Dendritic cell treated with granulocyte-macrophage colony-stimulating factor and Interleukin-4, amounts not matched to agents 40 ng/mL and 50 ng/mL, for 4 days (primary cell): ENCODE measurements at regions of chr20 and their contacts with region 1.

Region 1: GRCh38 chr20:21505161-21505809 is 8.6 kb downstream of the NKX2-2 start:
- H3K4me3 Mint-ChIP-seq: no peak overlapping the region
- H3K27ac Mint-ChIP-seq: no peak overlapping the region
- H3K4me1 Mint-ChIP-seq: peaks cover 38% of the 10 kb centered on the region
- H3K27me3 Mint-ChIP-seq: peaks cover 93% of the 10 kb centered on the region

Region 2: DNA sequence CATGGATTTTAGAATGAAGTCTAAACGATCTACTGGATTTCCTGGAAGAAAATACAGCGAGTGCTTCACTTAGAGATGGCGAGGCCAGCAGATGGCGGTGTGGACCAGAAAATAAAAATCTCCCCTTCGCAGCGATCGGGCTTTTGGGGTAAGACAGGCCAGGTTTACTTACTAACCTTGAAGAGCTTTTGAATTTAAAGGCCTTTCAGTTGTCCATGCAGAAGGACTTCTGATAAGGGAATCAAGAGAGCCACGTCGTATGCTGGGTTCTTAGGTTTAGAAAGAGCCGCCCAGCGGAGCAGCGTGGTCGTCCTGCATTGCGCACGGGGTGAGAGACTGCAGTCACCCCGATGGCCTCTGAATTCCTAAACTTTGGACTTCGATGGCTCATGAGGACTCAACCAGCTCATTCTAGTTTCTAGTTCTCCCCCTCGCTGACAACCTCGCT is 667.7 kb before region 1 on chr20:
- intact Hi-C with region 1: loop called (anchors 1 kb)
- H3K4me3 Mint-ChIP-seq: no peak overlapping the region
- H3K27ac Mint-ChIP-seq: no peak overlapping the region
- H3K4me1 Mint-ChIP-seq: no peaks in the 10 kb centered on the region
- H3K27me3 Mint-ChIP-seq: peaks cover 22% of the 10 kb centered on the region

Region 3: DNA sequence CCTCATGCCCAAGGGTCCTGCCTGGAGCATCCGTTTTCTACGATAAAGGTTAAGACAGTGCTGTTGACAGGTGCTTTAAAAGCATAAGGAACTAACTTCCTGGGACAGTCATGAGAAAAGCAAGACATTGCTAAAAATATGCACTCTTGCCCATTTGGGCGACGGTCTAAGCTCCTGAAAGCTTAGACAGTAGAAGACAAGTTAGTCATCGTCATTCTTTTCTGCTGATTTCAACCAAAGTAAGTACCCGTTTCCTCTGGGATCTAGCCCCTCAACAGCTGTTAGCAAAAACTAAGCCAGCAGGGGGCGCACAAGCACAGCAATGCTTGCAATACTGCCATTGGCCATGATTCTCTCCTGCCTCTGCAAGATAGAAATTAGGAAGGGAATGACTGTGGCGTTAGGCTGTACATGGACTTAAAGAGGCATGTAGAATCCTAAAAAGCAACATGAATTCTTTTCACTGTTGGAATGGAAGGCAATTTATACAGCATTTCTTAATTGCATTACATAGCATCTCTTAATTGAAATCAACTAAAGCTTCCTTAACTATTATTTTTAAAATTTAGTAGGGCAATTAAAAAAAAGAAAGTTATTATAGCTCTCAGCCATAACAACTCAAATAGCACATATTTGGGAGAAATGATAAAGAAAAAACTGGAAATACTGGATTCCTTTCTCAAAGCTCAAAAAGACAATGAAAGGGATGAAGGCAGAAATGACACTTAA is 645.0 kb before region 1 on chr20:
- intact Hi-C with region 1: loop called (anchors 1 kb)
- H3K4me3 Mint-ChIP-seq: no peak overlapping the region
- H3K27ac Mint-ChIP-seq: no peak overlapping the region
- H3K4me1 Mint-ChIP-seq: no peaks in the 10 kb centered on the region
- H3K27me3 Mint-ChIP-seq: peaks cover 20% of the 10 kb centered on the region

Region 4: GRCh38 chr20:21048841-21049273 is 456.4 kb before region 1 on chr20:
- intact Hi-C with region 1: loop called (anchors 2 kb)
- H3K4me3 Mint-ChIP-seq: no peak overlapping the region
- H3K27ac Mint-ChIP-seq: no peak overlapping the region
- H3K4me1 Mint-ChIP-seq: no peaks in the 10 kb centered on the region
- H3K27me3 Mint-ChIP-seq: peaks cover 29% of the 10 kb centered on the region

Region 5: GRCh38 chr20:21125849-21126580 is 379.3 kb before region 1 on chr20 and contains the start of gene KIZ:
- intact Hi-C with region 1: loop called (anchors 10 kb)
- H3K4me3 Mint-ChIP-seq: peak within 1 kb of the TSS; percentile 93
- H3K27ac Mint-ChIP-seq: peak within 1 kb of the TSS; percentile 90
- H3K4me1 Mint-ChIP-seq: peaks cover 20% of the 10 kb centered on the region
- H3K27me3 Mint-ChIP-seq: peaks cover 8% of the 10 kb centered on the region

Region 6: DNA sequence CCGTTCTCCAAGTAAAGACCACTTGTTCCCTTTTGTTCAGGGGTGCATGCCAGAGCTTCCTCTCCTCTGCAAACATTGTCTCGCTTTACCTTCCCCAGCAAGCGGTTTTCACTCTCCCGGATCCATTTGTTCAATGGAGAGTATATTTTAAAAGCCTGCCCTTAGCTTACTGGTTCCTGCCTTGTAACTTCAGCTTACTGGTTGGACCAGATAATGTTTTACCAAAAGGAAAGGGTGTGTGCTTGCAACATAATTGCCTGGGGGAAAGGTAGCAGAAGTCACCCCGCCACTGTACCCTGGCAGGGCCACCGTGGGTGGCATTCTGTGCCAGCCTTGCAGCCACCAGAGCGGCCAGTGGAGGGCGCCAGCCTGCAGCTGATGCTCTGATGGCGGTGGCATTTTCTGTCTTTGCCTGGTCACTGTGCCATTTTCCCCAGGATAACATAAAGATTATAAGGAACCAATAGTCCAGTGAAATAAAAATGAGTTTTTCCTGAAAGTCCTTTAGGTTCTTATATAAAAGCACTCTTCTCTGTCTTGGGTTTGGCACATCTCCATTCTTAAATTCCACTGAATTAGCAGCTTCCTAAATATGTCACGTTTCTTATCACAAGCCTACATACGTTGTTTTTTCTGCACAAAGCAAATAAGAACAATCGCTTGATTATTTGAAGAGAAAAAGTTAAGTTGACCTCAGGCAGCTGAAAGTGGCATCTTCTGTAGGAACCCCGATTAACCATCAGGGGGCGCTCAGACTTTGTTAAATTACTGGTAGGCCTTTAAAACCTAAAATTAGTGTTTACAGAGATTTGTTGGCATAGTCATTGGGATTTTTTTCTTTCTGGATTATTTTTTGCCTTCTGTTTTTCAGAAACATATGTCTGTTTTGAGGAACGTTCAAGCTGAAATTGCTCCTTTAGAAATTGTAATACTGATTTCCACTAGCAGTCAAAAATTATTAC is 269.5 kb before region 1 on chr20:
- intact Hi-C with region 1: loop called (anchors 1 kb)
- H3K4me3 Mint-ChIP-seq: no peak overlapping the region
- H3K27ac Mint-ChIP-seq: no peak overlapping the region
- H3K4me1 Mint-ChIP-seq: peaks cover 3% of the 10 kb centered on the region
- H3K27me3 Mint-ChIP-seq: no peaks in the 10 kb centered on the region

Region 7: GRCh38 chr20:21395666-21396598 is 109.4 kb before region 1 on chr20:
- intact Hi-C with region 1: loop called (anchors 5 kb)
- H3K4me3 Mint-ChIP-seq: peak overlapping the region; percentile 52
- H3K27ac Mint-ChIP-seq: no peak overlapping the region
- H3K4me1 Mint-ChIP-seq: peaks cover 27% of the 10 kb centered on the region
- H3K27me3 Mint-ChIP-seq: peaks cover 75% of the 10 kb centered on the region